ENCODE measurements at regions of chr6 and their contacts with region 1.

Region 1: GRCh38 chr6:62775427-62776022 is 435.7 kb upstream of the FKBP1C start:
- DNase-seq: peak; percentile 41
- H3K4me3 Mint-ChIP-seq: no peak overlapping the region
- H3K27ac Mint-ChIP-seq: no peak overlapping the region
- H3K4me1 Mint-ChIP-seq: no peaks in the 10 kb centered on the region
- H3K27me3 Mint-ChIP-seq: no peaks in the 10 kb centered on the region
- CTCF ChIP-seq: peak; percentile 50

Region 2: DNA sequence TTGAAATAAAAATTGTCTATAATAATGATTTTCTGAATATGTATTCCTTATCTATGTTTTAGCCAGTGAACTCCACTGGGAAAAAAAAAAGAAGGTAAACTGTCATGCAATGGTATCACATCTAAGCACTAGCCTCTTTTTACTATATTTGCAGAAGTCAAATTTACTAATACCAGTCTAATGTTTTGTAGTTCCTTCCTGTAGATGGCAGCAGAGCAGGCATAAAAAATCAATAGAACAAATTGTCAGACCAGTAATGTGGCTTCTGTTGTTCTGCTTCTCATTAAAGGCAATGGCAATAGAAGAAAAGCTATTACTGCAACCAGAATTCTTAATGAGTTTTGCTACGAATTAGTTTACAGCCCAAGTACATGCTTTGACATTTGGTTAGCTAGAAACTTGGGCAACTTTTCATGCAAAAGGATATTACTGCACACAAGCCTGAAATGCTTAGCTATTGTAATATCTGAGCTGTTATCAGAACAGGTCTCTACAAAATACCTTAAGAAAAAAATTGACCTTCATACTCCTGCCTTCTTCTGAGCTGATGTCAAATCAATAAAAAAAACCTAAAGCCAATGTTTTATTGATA is 966.4 kb before region 1 on chr6:
- CTCF ChIA-PET with region 1: interaction called, 3 read pairs
- POLR2A ChIA-PET with region 1: no interaction called
- intact Hi-C with region 1: loop called (anchors 10 kb)
- DNase-seq: peak; percentile 49
- H3K4me3 Mint-ChIP-seq: no peak overlapping the region
- H3K27ac Mint-ChIP-seq: no peak overlapping the region
- H3K4me1 Mint-ChIP-seq: no peaks in the 10 kb centered on the region
- H3K27me3 Mint-ChIP-seq: no peaks in the 10 kb centered on the region
- CTCF ChIP-seq: peak; percentile 44

Region 3: DNA sequence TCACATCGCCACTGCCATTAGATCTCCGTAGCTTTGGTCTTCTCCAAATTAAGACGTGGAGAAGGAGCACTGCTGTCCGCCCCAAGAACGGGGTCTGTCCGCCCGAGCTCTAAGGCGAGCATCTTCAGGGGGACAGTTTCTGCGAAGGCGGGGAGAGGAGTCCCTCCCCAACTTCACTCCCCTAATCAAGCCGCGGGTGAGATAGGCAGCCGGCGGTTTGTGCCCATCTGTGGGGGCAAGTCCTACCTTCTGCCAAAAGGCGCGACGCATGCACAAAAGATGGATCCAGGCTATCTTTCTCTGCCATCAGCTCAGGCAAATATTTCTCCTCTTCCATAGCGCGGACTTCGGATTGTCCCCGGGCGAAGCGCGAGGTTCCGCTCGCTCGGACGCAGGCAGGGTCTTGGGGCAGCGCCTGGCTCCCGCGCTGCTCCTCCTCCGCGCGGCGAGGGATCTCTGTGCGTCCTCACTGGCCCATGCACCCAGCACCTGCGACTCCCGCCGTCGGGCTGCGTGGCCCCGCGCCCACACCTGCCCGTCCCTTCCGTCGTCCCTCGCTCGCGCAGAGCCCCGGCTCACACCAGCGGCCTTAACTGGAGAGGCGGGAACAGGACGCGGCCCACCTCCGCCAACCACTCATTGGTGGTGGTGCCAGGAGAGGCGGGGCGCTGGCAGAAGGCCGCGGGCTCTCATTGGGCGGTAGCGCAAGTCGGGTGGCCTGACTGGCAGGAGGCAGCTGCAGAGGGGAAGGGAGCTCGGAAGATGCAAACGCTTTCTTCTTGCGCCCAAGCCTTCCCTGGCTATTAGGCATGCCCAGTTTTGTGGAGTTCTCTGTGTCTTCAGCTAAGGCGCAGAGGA is 489.7 kb before region 1 on chr6 and contains the start of gene KHDRBS2:
- CTCF ChIA-PET with region 1: no interaction called
- POLR2A ChIA-PET with region 1: no interaction called
- intact Hi-C with region 1: loop called (anchors 5 kb)
- DNase-seq: no peak
- H3K4me3 Mint-ChIP-seq: no peak within 1 kb of the TSS
- H3K27ac Mint-ChIP-seq: no peak within 1 kb of the TSS
- H3K4me1 Mint-ChIP-seq: no peaks in the 10 kb centered on the region
- H3K27me3 Mint-ChIP-seq: peaks cover 33% of the 10 kb centered on the region
- CTCF ChIP-seq: no peak
- total RNA-seq, gene KHDRBS2: not detected in 2 replicates

Region 4: GRCh38 chr6:62479697-62480220 is 295.8 kb before region 1 on chr6:
- CTCF ChIA-PET with region 1: interaction called, 5 read pairs
- POLR2A ChIA-PET with region 1: no interaction called
- intact Hi-C with region 1: loop called (anchors 2 kb)
- DNase-seq: no peak
- H3K4me3 Mint-ChIP-seq: no peak overlapping the region
- H3K27ac Mint-ChIP-seq: no peak overlapping the region
- H3K4me1 Mint-ChIP-seq: no peaks in the 10 kb centered on the region
- H3K27me3 Mint-ChIP-seq: peaks cover 66% of the 10 kb centered on the region
- CTCF ChIP-seq: no peak

Region 5: DNA sequence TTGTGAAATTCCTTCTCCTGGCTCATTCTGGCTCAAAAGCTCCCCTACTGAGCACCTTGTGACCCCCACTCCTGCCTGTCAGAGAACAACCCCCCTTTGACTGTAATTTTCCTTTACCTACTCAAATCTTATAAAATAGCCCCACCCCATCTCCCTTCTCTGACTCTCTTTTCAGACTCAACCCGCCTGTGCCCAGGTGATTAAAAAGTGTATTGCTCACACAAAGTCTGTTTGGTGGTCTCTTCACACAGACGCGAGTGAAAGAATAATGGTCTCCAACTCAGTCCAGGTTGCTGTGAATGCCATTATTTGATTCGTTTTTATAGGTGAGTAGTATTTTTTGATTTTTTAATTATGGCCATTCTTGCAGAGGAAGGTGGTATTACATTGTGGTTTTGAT is 21.7 kb after region 1 on chr6:
- CTCF ChIA-PET with region 1: no interaction called
- POLR2A ChIA-PET with region 1: no interaction called
- intact Hi-C with region 1: no loop called
- DNase-seq: no peak
- H3K4me3 Mint-ChIP-seq: no peak overlapping the region
- H3K27ac Mint-ChIP-seq: no peak overlapping the region
- H3K4me1 Mint-ChIP-seq: no peaks in the 10 kb centered on the region
- H3K27me3 Mint-ChIP-seq: no peaks in the 10 kb centered on the region
- CTCF ChIP-seq: no peak

Region 6: DNA sequence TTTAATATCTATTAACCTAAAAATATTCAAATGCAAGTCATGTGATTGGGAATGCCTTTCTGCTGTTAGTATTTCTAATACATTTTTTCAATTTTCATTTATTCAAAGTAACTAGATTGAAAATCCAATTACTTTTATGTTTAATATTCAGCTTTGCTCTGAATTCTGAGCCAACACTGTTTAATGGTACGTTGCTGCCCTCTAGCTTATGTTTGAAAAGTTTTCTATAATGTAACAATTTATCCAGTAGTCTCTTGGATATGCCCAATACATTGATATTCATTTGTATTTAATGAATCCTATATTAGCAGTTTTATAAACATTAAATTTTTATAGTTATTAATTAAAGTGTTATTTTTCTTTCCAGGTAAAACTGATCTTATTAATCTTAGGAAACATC is 496.9 kb after region 1 on chr6:
- CTCF ChIA-PET with region 1: interaction called, 3 read pairs
- POLR2A ChIA-PET with region 1: no interaction called
- intact Hi-C with region 1: loop called (anchors 10 kb)
- DNase-seq: peak; percentile 62
- H3K4me3 Mint-ChIP-seq: no peak overlapping the region
- H3K27ac Mint-ChIP-seq: no peak overlapping the region
- H3K4me1 Mint-ChIP-seq: no peaks in the 10 kb centered on the region
- H3K27me3 Mint-ChIP-seq: no peaks in the 10 kb centered on the region
- CTCF ChIP-seq: peak; percentile 56

Region 7: DNA sequence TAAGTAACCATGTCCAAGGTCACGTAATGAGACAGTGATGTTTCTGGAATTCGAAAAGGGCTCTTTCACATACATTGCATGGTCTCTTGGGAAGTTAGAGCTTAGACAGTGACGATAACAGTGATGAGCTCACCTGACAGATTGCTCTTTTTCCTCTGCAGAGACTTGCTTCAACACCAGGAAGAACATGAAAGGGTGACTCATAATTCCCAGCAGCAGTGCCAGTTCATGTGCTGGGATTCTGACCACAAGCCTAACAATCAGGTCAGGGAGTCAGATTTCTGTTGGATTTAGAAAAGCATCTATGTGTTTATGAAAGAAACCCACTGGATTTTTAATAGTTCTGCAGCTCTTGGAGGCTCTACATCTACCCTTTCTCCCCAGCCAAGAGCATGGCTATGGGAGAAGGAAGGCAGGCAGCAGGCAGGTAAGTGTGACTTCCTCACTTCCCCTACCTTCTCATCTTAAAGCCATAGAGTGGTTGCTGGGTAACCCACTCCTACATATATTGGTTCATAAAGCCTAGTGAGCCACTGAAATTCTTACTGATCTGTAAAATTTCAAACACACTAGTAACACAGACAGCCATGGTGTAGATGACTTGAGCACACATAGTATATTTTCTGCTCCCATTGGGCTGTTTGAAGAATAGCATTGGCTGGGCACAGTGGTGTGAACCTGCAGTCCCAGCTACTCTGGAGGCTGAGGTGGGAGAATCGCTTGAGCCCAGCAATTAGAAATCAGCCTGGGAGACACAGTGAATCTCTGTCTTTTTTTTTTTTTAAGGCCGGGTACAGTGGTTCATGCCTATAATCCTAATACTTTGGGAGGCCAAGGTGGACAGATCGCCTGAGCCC is 752.4 kb after region 1 on chr6:
- CTCF ChIA-PET with region 1: no interaction called
- POLR2A ChIA-PET with region 1: no interaction called
- intact Hi-C with region 1: no loop called
- DNase-seq: peak; percentile 98
- H3K4me3 Mint-ChIP-seq: peak overlapping the region; percentile 33
- H3K27ac Mint-ChIP-seq: peak overlapping the region; percentile 84
- H3K4me1 Mint-ChIP-seq: peaks cover 26% of the 10 kb centered on the region
- H3K27me3 Mint-ChIP-seq: no peaks in the 10 kb centered on the region
- CTCF ChIP-seq: no peak

Measured in MCF 10A (cell line).